Motor neuron (in vitro differentiated cells): ENCODE measurements at regions of chr4 and their contacts with region 1.

Region 1: DNA sequence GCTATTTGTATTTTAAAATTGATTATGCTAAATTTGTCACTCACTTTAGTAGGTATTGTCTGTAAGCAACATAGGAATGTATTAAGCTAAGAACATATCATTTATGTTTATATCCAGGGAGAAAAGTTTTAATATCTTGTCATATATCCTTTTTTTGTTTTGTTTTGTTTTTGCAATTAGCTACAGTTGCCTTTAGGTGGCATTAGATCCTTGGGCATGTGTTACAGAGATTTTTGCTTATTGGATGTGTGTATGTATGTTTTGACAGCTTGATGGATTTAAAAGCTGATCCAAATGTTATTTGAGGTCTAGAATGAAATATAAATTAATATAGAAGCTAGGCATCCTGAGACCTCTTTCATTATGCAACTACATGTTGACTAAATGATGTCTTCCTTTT is 36.1 kb upstream of the OTUD4 start:
- ATAC-seq: no peak
- H3K4me3 ChIP-seq: no peak overlapping the region
- H3K27ac ChIP-seq: no peak overlapping the region
- H3K4me1 ChIP-seq: no peaks in the 10 kb centered on the region

Region 2: GRCh38 chr4:145388043-145388442 is 171.5 kb after region 1 on chr4:
- in situ Hi-C with region 1: no loop called
- ATAC-seq: no peak
- H3K4me3 ChIP-seq: no peak overlapping the region
- H3K27ac ChIP-seq: no peak overlapping the region
- H3K4me1 ChIP-seq: no peaks in the 10 kb centered on the region

Region 3: GRCh38 chr4:145618932-145619638 is 402.6 kb after region 1 on chr4 and contains the start of gene MMAA:
- in situ Hi-C with region 1: loop called in 1 of 9 experiments (anchors 10 kb)
- ATAC-seq: peak; percentile 88 to 98 (median 98)
- H3K4me3 ChIP-seq: peak within 1 kb of the TSS; percentile 56 to 71 (median 63)
- H3K27ac ChIP-seq: peak within 1 kb of the TSS; percentile 83 to 91
- H3K4me1 ChIP-seq: peaks cover 0 to 6% of the 10 kb centered on the region in 2 donors
- total RNA-seq, gene MMAA: 2.3 to 15.2 (median 5.8) TPM

Region 4: DNA sequence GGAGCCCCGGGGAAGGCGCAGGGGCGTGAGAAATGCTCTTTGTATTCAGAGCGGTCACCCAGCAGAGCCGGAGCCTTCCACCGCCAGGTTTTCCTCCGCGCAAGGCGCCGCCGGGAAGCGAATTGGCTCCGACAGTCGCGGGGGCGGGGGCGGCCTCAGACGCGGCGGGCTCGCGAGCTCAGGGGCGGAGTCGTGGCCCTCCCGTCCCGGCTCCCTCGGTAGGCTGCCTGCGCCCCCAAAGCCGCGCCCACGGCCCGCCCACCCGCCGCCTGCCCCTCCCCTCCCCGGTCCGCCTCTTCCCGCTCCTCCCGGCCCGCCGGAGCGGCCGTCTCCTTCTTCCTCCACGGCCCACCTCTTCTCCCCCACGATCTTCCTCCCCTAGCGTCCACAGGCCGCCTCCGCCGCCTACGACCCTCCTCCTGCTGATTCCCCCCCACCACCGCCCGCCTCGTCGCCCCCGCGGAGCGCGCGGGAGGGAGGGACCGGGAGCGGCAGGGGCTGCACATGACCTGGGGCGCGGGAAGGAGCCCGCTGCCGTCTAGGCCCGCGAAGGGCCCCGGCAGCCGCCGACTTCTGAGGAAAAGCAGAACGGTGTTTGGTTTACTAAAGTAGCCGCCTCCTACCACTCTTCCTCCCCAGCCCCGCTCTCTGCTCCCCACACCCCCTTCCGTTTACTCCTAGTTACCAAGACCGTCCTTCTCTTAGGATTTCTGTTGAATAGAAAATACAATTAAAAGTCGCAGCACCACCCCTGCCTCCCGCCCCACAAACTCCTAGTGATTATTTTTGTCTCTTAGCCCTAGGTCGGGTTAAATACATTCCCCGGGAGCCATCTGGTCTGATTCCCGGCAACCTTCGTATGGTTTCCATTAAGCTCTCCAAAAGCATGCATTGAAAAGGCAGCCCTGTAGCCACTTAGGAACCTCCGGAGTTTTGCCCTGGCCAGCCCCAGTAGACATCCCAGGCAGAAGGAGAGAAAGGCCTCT is 516.7 kb after region 1 on chr4:
- in situ Hi-C with region 1: loop called in 1 of 9 experiments (anchors 25 kb)
- ATAC-seq: peak; percentile 50 to 88 (median 75)
- H3K4me3 ChIP-seq: peak overlapping the region; percentile 31 to 43 (median 38)
- H3K27ac ChIP-seq: peak overlapping the region; percentile 18 to 91
- H3K4me1 ChIP-seq: peaks cover 14 to 31% of the 10 kb centered on the region in 2 donors